Mammary epithelial cell (primary cell): ENCODE measurements at regions of chr13 and their contacts with region 1.

Region 1: DNA sequence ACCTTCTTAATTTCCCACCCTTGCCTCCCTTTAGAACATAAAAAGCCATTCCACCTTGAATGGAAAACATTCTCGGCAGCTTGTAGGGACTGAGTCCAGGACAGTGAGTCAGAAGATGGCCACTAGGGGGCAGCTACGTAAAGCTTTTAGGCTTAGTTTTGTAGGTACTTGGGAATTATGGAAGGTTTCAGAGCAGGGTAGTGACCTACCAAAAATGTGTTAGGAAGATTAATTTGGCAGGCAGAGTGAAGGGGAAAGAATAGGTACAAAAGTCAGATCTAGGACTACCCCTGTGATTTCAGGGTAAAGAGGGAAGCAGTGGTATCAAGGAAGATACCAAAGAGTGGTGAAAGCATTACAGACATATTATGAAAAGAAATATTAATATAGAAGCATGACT is 198.4 kb downstream of the NDFIP2 start:
- DNase-seq: peak; percentile 58
- H3K4me3 ChIP-seq: no peak overlapping the region
- H3K27ac ChIP-seq: no peak overlapping the region
- H3K4me1 ChIP-seq: peaks cover 33% of the 10 kb centered on the region
- H3K27me3 ChIP-seq: no peaks in the 10 kb centered on the region
- CTCF ChIP-seq: peak; percentile 80 to 83

Region 2: DNA sequence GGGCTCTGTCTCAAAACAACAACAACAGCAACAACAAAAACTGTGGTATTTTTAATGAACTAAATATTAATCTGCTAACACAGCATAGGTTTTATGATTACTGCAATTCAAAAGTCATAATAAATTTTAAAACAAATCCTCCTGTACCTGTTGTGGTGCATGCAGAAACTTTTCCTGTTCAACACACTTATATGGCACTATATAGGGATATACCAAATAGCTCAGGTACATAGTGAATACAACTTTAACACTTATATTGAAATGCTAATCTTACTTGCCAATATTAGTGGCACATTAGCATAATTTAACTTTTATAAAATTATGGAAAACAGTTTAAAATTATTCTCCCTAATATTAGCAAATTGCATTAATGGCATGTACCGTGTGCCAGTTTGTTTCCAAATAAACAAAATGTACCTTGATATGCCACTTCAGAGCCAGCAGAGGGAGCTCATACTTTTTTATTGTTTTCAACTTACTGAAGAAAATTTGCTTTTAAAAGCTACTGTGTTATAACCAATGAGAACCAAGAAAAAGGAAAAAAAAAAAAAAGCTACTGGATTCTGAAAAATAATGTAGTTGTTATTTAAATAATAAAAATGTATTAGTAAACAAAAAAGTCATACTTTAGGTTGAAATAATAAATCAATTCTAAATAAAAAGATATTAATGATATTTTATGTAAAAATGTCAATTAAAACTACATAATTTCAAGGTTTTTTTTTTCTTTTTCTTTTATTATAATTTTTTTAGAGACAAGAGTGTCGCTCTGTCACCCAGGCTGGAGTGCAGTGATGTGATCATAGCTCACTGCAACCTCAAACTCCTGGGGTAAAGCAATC is 255.3 kb before region 1 on chr13:
- CTCF ChIA-PET with region 1: interaction called, 7 read pairs
- dilution Hi-C with region 1: no loop called
- in situ Hi-C with region 1: no loop called
- intact Hi-C with region 1: loop called (anchors 2 kb)
- DNase-seq: no peak
- H3K4me3 ChIP-seq: no peak overlapping the region
- H3K27ac ChIP-seq: no peak overlapping the region
- H3K4me1 ChIP-seq: no peaks in the 10 kb centered on the region
- H3K27me3 ChIP-seq: no peaks in the 10 kb centered on the region
- CTCF ChIP-seq: peak; percentile 59 to 67

Region 3: DNA sequence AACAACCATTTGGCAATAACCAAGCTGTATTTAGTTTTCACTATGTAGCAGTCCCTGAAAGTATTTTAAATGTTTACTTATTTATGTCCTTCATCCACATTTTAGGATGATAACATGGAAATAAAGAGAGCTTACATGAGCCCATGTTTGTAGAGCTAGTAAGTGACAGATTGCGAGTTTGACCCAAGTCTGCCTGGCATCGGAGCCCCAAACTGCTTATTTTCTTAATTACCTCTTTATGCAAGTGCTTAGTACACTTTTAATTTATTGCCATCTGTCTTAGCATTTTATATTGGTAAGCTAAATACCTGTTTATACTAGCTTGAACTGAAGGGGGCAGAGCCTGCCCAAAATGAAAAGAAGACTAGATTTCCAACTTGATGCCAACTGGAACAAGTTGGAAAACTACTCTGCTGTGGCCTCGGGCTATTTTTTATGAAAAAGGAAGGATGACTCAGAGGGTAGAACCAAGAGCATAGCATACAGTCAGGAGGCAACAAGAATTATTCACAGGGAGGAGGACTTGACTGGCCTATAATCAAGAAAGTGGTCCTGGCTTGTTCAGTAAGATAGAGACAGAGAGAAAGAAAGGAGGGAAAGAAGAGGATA is 48.2 kb before region 1 on chr13:
- CTCF ChIA-PET with region 1: interaction called, 8 read pairs
- dilution Hi-C with region 1: no loop called
- in situ Hi-C with region 1: no loop called
- intact Hi-C with region 1: loop called (anchors 1 kb)
- DNase-seq: peak; percentile 97
- H3K4me3 ChIP-seq: no peak overlapping the region
- H3K27ac ChIP-seq: peak overlapping the region; percentile 62
- H3K4me1 ChIP-seq: peaks cover 36% of the 10 kb centered on the region
- H3K27me3 ChIP-seq: no peaks in the 10 kb centered on the region
- CTCF ChIP-seq: peak; percentile 40 to 66

Region 4: DNA sequence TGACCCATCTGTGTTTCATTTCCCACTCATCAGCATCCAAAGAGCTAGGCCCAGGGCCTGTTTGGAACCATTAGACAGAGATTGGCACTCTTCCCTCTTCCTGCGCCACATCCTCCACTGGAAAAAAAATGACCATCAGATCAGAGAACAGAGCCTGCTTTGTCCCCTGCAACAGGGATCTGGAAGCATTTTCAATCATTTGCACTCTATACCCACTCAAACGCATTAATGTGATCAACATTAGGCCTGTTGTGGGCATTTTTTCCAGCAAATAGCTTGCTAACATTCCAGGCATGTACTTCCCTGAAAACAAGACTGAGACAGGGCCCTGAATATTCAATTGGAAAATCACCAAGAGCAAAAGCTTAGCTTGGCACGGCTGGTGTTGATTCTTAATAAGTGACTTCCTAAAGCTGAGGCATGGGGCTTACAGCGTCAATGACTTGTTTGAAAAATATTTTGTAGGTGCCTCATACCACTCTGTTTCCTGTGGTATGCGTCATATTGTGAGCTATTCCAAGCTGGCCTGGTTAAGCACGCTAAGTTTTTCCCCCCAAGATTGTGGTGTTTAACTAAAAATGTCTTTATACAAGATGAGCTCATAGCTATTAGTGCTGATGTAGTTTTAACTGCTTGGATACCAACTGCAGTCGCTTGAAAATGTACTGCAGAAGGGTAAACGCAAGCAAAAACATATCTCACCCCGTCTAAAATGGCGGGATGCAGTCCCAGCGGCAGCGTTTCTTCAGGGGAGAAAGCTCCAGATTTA is 257.2 kb after region 1 on chr13:
- CTCF ChIA-PET with region 1: no interaction called
- dilution Hi-C with region 1: no loop called
- in situ Hi-C with region 1: no loop called
- intact Hi-C with region 1: loop called (anchors 10 kb)
- DNase-seq: peak; percentile 98
- H3K4me3 ChIP-seq: no peak overlapping the region
- H3K27ac ChIP-seq: peak overlapping the region; percentile 89
- H3K4me1 ChIP-seq: peaks cover 40% of the 10 kb centered on the region
- H3K27me3 ChIP-seq: no peaks in the 10 kb centered on the region
- CTCF ChIP-seq: no peak

Region 5: GRCh38 chr13:80363890-80364503 is 684.7 kb after region 1 on chr13:
- CTCF ChIA-PET with region 1: no interaction called
- dilution Hi-C with region 1: no loop called
- in situ Hi-C with region 1: loop called in 1 of 2 experiments (anchors 10 kb)
- intact Hi-C with region 1: loop called (anchors 1 kb)
- DNase-seq: peak; percentile 5
- H3K4me3 ChIP-seq: peak overlapping the region in 1 of 3 experiments; percentile 41
- H3K27ac ChIP-seq: peak overlapping the region; percentile 27
- H3K4me1 ChIP-seq: peaks cover 10% of the 10 kb centered on the region
- H3K27me3 ChIP-seq: no peaks in the 10 kb centered on the region
- CTCF ChIP-seq: peak; percentile 69 to 81